Activated CD8-positive, alpha-beta T cell treated with anti-CD3 and anti-CD28 coated beads, Interleukin-2, amount 10 ng/mL, durations not matched to agents 7 days and 5 days (primary cell): ENCODE measurements at regions of chr1 and their contacts with region 1.

Region 1: DNA sequence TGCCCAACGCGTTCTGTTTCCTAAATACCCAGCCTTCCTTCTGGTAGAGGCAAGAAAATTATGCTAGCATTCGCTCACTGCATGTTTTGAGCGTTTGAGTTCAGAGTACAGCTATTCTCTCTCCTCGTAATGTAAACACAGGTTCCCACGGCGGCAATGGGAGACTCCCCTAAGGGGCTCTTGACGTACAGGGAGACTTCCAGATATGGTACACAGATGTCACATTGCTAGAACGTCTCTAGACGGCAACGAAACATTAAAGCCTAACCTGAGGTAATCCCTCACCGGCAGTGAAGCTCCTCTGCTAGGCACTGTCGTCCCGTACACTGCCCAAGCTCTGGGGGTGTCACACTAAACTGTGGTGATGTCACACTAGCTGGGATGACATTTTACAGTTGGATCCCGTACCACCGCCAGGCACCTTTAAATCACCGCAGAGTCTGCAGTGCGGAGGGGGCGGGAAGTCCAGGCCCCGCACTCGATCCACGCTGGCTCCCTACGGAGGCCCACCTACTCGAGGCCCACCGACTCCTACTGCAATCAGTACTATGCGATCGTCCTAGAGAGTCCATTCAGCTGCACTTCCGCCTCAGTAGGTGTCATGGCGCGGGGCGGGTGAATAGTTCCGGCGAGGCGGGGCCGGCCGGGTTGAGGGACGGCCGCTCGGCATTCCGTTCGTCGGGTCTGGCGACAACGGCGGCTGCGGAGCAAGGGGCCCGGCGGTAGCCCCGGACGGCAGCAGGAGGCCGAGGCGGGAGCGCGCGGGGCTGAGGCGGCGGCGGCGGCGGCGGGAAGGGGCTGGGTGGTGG is at the start of gene HIPK1:
- DNase-seq: peak; percentile 95
- ATAC-seq: peak; percentile 62
- H3K4me3 Mint-ChIP-seq: peak within 1 kb of the TSS; percentile 95
- H3K27ac Mint-ChIP-seq: peak within 1 kb of the TSS; percentile 99
- H3K4me1 Mint-ChIP-seq: peaks cover 45% of the 10 kb centered on the region
- H3K27me3 Mint-ChIP-seq: peaks cover under 1% of the 10 kb centered on the region
- total RNA-seq, gene HIPK1: 89.3 to 92.7 TPM

Region 2: GRCh38 chr1:113881661-113882060 is 47.5 kb before region 1 on chr1:
- CTCF ChIA-PET with region 1: interaction called, 4 read pairs
- POLR2A ChIA-PET with region 1: interaction called, 26 read pairs
- DNase-seq: no peak
- ATAC-seq: no peak
- H3K4me3 Mint-ChIP-seq: no peak overlapping the region
- H3K27ac Mint-ChIP-seq: no peak overlapping the region
- H3K4me1 Mint-ChIP-seq: peaks cover 42% of the 10 kb centered on the region
- H3K27me3 Mint-ChIP-seq: no peaks in the 10 kb centered on the region

Region 3: DNA sequence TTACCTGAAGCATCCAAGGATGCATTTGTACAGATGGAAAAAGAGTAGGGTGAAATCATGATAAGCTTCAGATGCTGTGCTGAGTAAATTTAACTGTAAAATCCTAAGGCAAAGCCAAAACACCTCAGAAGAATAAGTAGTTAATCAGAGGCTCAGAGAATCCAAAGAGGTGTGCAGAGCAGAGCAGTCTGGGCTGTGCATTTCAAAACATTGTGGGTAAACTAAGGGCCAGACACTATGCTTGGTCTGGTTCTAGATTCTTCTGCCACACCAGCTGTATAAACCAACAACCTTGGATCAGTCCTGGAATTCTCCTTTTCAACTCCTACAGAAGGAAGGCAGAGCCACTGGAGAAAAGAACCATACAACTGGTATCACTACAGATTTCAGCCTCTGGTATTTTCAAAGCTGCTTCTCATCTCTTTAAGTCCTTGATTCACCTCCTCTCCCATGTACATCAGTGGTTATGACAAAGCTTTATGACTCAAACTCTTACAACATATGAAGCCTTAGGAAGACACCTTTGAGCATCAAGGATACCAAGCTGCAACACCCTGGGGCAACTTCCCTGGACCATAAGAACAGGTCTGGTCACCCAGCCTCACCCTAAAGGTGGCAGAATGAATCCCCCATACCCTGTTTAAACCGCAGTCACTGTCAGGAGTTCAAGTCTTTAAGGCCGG is 11.6 kb before region 1 on chr1:
- CTCF ChIA-PET with region 1: interaction called, 8 read pairs
- POLR2A ChIA-PET with region 1: interaction called, 20 read pairs
- DNase-seq: no peak
- ATAC-seq: peak; percentile 36
- H3K4me3 Mint-ChIP-seq: no peak overlapping the region
- H3K27ac Mint-ChIP-seq: no peak overlapping the region
- H3K4me1 Mint-ChIP-seq: peaks cover 2% of the 10 kb centered on the region
- H3K27me3 Mint-ChIP-seq: peaks cover 2% of the 10 kb centered on the region

Region 4: DNA sequence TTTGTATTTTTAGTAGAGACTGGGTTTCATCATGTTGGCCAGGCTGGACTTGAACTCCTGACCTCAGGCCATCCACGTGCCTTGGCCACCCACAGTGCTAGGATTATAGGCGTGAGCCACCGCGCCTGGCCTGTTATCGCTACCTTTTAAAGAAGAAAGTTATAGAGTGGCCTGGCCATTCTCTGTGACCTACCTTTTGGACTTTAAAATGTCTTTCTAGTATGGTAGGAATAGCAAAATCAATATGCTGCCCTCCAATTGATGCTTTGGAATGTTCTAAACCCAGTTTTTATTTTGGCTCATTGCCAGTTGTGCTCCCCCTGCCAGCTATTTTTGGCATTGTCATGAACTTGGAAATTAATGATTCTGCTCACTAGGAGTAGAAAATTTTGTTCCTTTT is 19.9 kb after region 1 on chr1:
- CTCF ChIA-PET with region 1: interaction called, 121 read pairs
- POLR2A ChIA-PET with region 1: interaction called, 66 read pairs
- DNase-seq: no peak
- ATAC-seq: no peak
- H3K4me3 Mint-ChIP-seq: no peak overlapping the region
- H3K27ac Mint-ChIP-seq: peak overlapping the region; percentile 36
- H3K4me1 Mint-ChIP-seq: peaks cover 59% of the 10 kb centered on the region
- H3K27me3 Mint-ChIP-seq: no peaks in the 10 kb centered on the region

Region 5: GRCh38 chr1:113978863-113979702 is 49.9 kb after region 1 on chr1 and contains the start of gene OLFML3:
- CTCF ChIA-PET with region 1: interaction called, 14 read pairs
- POLR2A ChIA-PET with region 1: interaction called, 7 read pairs
- DNase-seq: peak; percentile 76
- ATAC-seq: no peak
- H3K4me3 Mint-ChIP-seq: no peak within 1 kb of the TSS
- H3K27ac Mint-ChIP-seq: peak within 1 kb of the TSS; percentile 19
- H3K4me1 Mint-ChIP-seq: peaks cover 49% of the 10 kb centered on the region
- H3K27me3 Mint-ChIP-seq: no peaks in the 10 kb centered on the region
- total RNA-seq, gene OLFML3: 0.42 to 0.78 TPM